ENCODE measurements at regions of chr10 and their contacts with region 1.

Region 1: GRCh38 chr10:98134431-98135221 is at the start of gene R3HCC1L:
- DNase-seq: peak; percentile 93
- H3K4me3 Mint-ChIP-seq: peak within 1 kb of the TSS; percentile 95
- H3K27ac Mint-ChIP-seq: peak within 1 kb of the TSS; percentile 89
- H3K4me1 Mint-ChIP-seq: peaks cover 44% of the 10 kb centered on the region
- H3K27me3 Mint-ChIP-seq: no peaks in the 10 kb centered on the region
- total RNA-seq, gene R3HCC1L: 20.0 and 20.1 TPM in 2 replicates

Region 2: GRCh38 chr10:97425964-97426775 is 708.5 kb before region 1 on chr10 and contains the start of gene PGAM1:
- intact Hi-C with region 1: loop called (anchors 10 kb)
- DNase-seq: peak; percentile 98
- H3K4me3 Mint-ChIP-seq: peak within 1 kb of the TSS; percentile 94
- H3K27ac Mint-ChIP-seq: peak within 1 kb of the TSS; percentile 99
- H3K4me1 Mint-ChIP-seq: peaks cover 46% of the 10 kb centered on the region
- H3K27me3 Mint-ChIP-seq: peaks cover 2% of the 10 kb centered on the region
- total RNA-seq, gene PGAM1: 967 and 979 TPM in 2 replicates

Region 3: DNA sequence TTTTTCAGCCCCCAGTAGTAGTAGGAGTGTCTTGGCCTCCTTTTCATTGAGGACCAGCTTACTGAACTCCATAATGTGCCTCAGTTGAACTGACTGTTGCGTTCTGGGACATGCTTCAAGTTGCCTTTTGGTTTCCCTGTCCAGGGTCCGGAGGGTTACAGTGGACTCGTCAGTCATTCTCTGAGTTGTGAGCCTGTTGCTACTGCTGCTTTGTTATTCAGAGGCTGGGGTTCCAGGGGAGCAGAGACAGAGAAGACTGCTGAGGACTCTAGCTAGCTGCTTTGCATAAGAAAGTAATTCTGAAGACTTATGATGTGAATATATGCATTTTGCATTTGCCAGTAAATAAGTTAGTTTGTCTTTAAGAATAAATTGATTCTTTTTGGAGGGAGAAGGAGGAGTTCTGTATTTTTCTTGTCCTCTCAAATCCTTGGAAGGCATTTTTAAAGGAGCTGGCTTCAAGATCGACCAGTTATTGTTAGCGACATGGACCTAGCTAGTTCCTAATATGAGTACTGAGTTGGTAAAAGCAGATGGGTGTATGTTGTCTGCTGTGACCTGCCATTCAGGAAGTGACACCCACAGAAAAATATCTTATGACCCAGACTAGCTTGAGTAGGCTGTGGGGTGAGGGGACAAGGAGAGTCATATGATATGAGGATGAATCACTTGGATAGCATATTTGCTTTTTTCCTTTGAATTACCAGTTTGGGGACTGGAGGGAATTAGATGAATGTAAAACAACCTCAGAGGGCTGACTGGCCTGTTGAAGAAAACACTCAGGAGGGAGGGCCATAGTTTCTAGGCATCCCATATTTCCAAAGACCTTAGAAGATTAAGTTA is 485.8 kb before region 1 on chr10:
- intact Hi-C with region 1: loop called (anchors 1 kb)
- DNase-seq: peak; percentile 24
- H3K4me3 Mint-ChIP-seq: peak overlapping the region; percentile 39
- H3K27ac Mint-ChIP-seq: peak overlapping the region; percentile 45
- H3K4me1 Mint-ChIP-seq: peaks cover 18% of the 10 kb centered on the region
- H3K27me3 Mint-ChIP-seq: no peaks in the 10 kb centered on the region

Region 4: DNA sequence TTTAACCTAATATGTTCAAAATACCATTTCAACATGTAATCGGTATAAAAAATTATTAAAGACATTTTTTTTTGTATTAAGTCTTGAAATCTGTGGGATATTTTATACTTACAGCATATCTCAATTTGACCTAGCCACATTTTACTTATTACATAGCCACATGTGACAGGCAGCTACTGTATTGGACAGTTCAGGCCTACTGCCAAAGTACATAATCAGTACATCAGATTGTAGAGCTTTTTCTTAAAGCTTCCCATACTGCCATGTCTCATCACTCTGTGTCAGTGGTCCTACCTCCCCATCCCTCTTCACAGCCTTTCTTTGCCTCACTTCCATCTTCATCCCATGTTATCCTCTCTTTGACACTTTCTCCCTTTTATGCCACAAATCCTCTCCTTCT is 90.4 kb after region 1 on chr10:
- intact Hi-C with region 1: loop called (anchors 5 kb)
- DNase-seq: no peak
- H3K4me3 Mint-ChIP-seq: no peak overlapping the region
- H3K27ac Mint-ChIP-seq: no peak overlapping the region
- H3K4me1 Mint-ChIP-seq: peaks cover 8% of the 10 kb centered on the region
- H3K27me3 Mint-ChIP-seq: no peaks in the 10 kb centered on the region

Region 5: GRCh38 chr10:98299341-98299740 is 164.7 kb after region 1 on chr10:
- intact Hi-C with region 1: no loop called
- DNase-seq: no peak
- H3K4me3 Mint-ChIP-seq: no peak overlapping the region
- H3K27ac Mint-ChIP-seq: no peak overlapping the region
- H3K4me1 Mint-ChIP-seq: no peaks in the 10 kb centered on the region
- H3K27me3 Mint-ChIP-seq: no peaks in the 10 kb centered on the region

Region 6: GRCh38 chr10:99430451-99431189 is 1296.0 kb after region 1 on chr10 and contains the start of gene GOT1:
- intact Hi-C with region 1: loop called (anchors 10 kb)
- DNase-seq: peak; percentile 93
- H3K4me3 Mint-ChIP-seq: peak within 1 kb of the TSS; percentile 99
- H3K27ac Mint-ChIP-seq: peak within 1 kb of the TSS; percentile 94
- H3K4me1 Mint-ChIP-seq: peaks cover 26% of the 10 kb centered on the region
- H3K27me3 Mint-ChIP-seq: peaks cover 3% of the 10 kb centered on the region
- total RNA-seq, gene GOT1: 35.9 and 36.1 TPM in 2 replicates